Panc1 (cell line): ENCODE measurements at regions of chr12 and their contacts with region 1.

Region 1: DNA sequence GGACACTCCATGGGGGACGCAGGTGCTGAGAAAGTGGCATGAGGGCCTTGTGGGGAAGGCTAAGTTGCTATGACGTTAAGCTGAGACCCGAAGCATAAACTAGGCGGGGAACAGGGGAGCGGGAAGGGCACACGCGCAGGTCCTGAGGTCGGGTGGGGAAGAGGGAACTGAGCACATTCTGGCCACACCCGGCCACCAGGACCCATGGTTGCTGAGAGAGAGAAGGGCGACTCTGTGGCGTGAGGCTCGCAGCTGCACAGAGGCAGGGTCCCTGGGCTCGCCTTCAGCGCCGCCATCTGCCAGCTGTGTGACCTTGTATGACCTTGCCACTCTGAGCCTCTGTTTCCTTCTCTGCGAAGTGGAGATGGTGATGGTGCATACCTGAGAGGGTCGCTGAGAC is 182.5 kb downstream of the PHETA1 start:
- DNase-seq: no peak
- ATAC-seq: no peak
- H3K4me3 ChIP-seq: no peak overlapping the region
- H3K27ac ChIP-seq: no peak overlapping the region
- H3K4me1 ChIP-seq: no peaks in the 10 kb centered on the region
- H3K27me3 ChIP-seq: peaks cover 5% of the 10 kb centered on the region
- CTCF ChIP-seq: no peak

Region 2: DNA sequence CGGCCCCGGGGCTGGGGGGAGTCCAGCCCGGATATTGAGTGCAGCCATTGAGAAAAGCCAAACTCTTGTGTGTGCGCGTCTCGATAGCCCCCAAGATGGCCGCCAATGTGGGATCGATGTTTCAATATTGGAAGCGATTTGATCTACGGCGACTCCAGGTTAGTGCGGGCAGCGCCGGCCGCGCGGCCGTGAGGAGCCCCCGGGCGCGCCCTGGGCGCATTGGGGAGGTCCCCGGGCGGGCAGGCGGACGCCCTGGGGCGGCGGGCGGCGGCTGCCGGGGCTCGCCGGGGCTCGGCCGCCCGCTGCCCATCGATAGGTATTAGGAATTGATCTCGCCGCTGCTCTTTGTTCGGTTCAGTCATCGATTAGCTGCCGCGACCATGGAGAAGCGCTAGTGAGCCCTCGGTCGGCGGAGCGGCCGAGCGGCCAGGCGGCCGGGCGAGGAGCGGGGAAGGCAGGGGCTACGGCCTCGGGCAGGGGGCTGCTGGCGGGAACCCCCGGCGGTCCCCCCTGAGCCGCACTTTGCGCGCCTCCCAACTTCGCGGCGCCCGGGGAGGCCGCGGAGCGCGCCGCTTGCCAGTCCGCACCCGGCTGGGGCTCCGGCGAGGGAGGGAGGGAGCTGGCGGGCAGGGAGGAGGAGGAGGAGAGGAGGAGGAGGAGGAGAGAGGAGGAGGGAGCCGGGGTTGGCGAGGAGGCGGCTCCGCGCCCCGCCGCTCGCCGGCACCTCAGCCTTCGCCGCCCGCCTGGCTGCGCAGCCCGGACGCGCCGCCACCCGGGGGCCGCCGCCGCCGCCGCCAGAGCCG is 152.1 kb before region 1 on chr12:
- CTCF ChIA-PET with region 1: interaction called, 15 read pairs
- POLR2A ChIA-PET with region 1: no interaction called
- in situ Hi-C with region 1: no loop called
- intact Hi-C with region 1: no loop called
- DNase-seq: no peak
- ATAC-seq: peak; percentile 70
- H3K4me3 ChIP-seq: peak within 1 kb of the TSS; percentile 17 to 23; a peak in 3 of 4 replicates
- H3K27ac ChIP-seq: no peak within 1 kb of the TSS
- H3K4me1 ChIP-seq: peaks cover 14% of the 10 kb centered on the region; the same call in 1 of the 2 replicates
- H3K27me3 ChIP-seq: peaks cover 48% of the 10 kb centered on the region
- CTCF ChIP-seq: no peak

Region 3: DNA sequence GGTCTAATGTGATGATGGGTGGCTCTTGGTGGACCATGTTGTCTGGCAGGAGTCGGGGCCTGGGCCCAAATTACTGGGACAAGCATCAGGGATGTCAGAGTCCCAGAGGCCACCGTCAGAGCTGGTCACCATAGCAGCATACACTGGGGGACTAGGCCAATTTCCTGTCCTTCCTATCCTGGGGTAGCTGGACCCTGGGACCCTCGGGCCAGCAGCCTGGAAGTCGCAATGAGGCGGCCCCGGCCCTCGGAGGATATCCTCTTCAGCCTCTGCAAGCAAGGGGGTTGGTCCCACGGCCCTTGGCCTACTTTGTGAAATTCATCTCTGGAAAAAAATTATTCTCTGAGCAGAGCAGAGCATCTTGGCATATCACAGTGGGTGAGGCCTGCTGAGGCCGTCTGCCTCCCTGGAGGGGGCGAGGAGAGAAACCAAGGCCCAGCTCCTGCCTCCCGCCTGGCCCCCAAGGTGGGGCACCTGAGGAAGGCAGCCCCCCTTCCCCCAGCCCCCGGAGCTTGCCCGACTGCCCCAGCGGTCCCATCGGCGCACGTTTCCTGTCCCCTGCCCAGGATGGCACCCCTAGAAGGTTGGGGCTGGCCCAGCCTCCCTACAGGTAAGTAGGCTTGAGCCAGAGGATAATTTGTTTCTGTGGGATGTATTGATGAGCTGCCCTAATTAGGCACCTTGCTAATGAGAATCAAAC is 131.0 kb before region 1 on chr12:
- CTCF ChIA-PET with region 1: no interaction called
- POLR2A ChIA-PET with region 1: interaction called, 17 read pairs
- in situ Hi-C with region 1: no loop called
- intact Hi-C with region 1: no loop called
- DNase-seq: no peak
- ATAC-seq: no peak
- H3K4me3 ChIP-seq: no peak overlapping the region
- H3K27ac ChIP-seq: no peak overlapping the region
- H3K4me1 ChIP-seq: no peaks in the 10 kb centered on the region
- H3K27me3 ChIP-seq: no peaks in the 10 kb centered on the region
- CTCF ChIP-seq: no peak